B cell (primary cell): ENCODE measurements at regions of chr4 and their contacts with region 1.

Region 1: GRCh38 chr4:40309250-40309774 is 25.8 kb upstream of the CHRNA9 start:
- DNase-seq: peak; percentile 91
- ATAC-seq: peak; percentile 16
- H3K4me3 ChIP-seq: peak overlapping the region in 3 of 5 experiments; percentile 17 to 41 (median 38)
- H3K4me3 Mint-ChIP-seq: peak overlapping the region; percentile 87
- H3K27ac ChIP-seq: peak overlapping the region; percentile 94 to 98
- H3K27ac Mint-ChIP-seq: peak overlapping the region; percentile 97
- H3K4me1 ChIP-seq: peaks cover 67 to 71% of the 10 kb centered on the region in 2 donors
- H3K4me1 Mint-ChIP-seq: peaks cover 73% of the 10 kb centered on the region
- H3K27me3 ChIP-seq: no peaks in the 10 kb centered on the region
- H3K27me3 Mint-ChIP-seq: no peaks in the 10 kb centered on the region
- CTCF ChIP-seq: peak; percentile 83

Region 2: DNA sequence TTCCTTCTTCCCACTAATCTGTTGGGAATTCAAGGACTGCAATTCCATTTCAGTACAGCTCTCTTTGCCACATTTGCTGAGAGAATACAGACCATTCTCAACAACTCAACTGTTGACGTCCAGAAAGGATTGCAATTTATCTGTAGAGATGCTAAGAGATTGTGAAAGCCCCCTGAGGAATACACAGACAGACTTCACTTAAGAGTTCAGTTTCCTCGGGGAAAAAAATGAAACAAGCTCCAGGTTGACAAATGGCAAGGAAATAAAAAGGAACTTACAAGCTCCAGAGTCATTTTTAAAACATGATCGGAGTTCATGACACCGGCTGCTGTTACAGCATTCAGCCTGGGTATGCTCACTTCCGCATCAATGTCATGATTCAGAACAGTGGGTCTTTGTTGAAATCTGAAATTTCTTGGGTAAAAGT is 1540.3 kb before region 1 on chr4:
- CTCF ChIA-PET with region 1: no interaction called
- POLR2A ChIA-PET with region 1: no interaction called
- intact Hi-C with region 1: loop called (anchors 10 kb)
- DNase-seq: peak; percentile 35
- ATAC-seq: peak; percentile 69
- H3K4me3 ChIP-seq: peak overlapping the region in 1 of 5 experiments; percentile 11
- H3K4me3 Mint-ChIP-seq: peak overlapping the region; percentile 73
- H3K27ac ChIP-seq: peak overlapping the region; percentile 4 to 66
- H3K27ac Mint-ChIP-seq: peak overlapping the region; percentile 89
- H3K4me1 ChIP-seq: peaks cover 53 to 57% of the 10 kb centered on the region in 2 donors
- H3K4me1 Mint-ChIP-seq: peaks cover 76% of the 10 kb centered on the region
- H3K27me3 ChIP-seq: no peaks in the 10 kb centered on the region
- H3K27me3 Mint-ChIP-seq: no peaks in the 10 kb centered on the region
- CTCF ChIP-seq: no peak

Region 3: DNA sequence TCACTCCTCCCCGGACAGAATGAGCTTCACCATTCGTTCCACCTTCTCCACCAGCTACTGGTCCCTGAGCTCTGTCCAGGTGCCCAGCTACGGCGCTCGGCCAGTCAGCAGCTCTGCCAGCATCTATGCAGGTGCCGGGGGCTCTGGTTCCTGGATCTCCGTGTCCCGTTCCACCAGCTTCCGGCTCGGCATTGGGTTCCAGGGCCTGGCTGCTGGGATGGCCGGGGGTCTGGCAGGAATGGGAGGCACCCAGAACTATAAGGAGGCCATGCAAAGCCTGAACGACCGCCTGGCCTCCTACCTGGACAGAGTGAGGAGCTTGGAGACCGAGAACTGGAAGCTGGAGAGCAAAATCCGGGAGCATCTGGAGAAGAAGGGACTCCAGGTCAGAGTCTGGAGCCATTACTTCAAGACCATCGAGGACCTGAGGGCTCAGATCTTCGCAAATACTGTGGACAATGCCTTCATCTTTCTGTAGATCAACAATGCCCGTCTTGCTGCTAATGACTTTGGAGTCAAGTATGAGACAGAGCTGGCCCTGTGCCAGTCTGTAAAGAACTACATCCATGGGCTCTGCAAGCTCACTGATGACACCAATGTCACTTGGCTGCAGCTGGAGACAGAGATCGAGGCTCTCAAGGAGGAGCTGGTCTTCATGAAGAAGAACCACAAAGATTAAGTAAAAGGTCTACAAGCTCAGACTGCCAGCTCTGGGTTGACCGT is 288.9 kb before region 1 on chr4:
- CTCF ChIA-PET with region 1: no interaction called
- POLR2A ChIA-PET with region 1: interaction called, 10 read pairs
- intact Hi-C with region 1: no loop called
- DNase-seq: no peak
- ATAC-seq: no peak
- H3K4me3 ChIP-seq: no peak overlapping the region
- H3K4me3 Mint-ChIP-seq: no peak overlapping the region
- H3K27ac ChIP-seq: no peak overlapping the region
- H3K27ac Mint-ChIP-seq: no peak overlapping the region
- H3K4me1 ChIP-seq: no peaks in the 10 kb centered on the region
- H3K4me1 Mint-ChIP-seq: no peaks in the 10 kb centered on the region
- H3K27me3 ChIP-seq: no peaks in the 10 kb centered on the region
- H3K27me3 Mint-ChIP-seq: no peaks in the 10 kb centered on the region
- CTCF ChIP-seq: no peak

Region 4: GRCh38 chr4:40046311-40046980 is 262.9 kb before region 1 on chr4:
- CTCF ChIA-PET with region 1: no interaction called
- POLR2A ChIA-PET with region 1: no interaction called
- intact Hi-C with region 1: no loop called
- DNase-seq: no peak
- ATAC-seq: no peak
- H3K4me3 ChIP-seq: no peak overlapping the region
- H3K4me3 Mint-ChIP-seq: no peak overlapping the region
- H3K27ac ChIP-seq: no peak overlapping the region
- H3K27ac Mint-ChIP-seq: no peak overlapping the region
- H3K4me1 ChIP-seq: no peaks in the 10 kb centered on the region
- H3K4me1 Mint-ChIP-seq: no peaks in the 10 kb centered on the region
- H3K27me3 ChIP-seq: no peaks in the 10 kb centered on the region
- H3K27me3 Mint-ChIP-seq: no peaks in the 10 kb centered on the region
- CTCF ChIP-seq: no peak

Region 5: GRCh38 chr4:40193016-40193571 is 116.2 kb before region 1 on chr4:
- CTCF ChIA-PET with region 1: interaction called, 93 read pairs
- POLR2A ChIA-PET with region 1: interaction called, 10 read pairs
- intact Hi-C with region 1: loop called (anchors 1 kb)
- DNase-seq: peak; percentile 73
- ATAC-seq: peak; percentile 37
- H3K4me3 ChIP-seq: peak overlapping the region; percentile 45 to 91 (median 60)
- H3K4me3 Mint-ChIP-seq: peak overlapping the region; percentile 96
- H3K27ac ChIP-seq: peak overlapping the region; percentile 93 to 99
- H3K27ac Mint-ChIP-seq: peak overlapping the region; percentile 91
- H3K4me1 ChIP-seq: peaks cover 59 to 79% of the 10 kb centered on the region in 2 donors
- H3K4me1 Mint-ChIP-seq: peaks cover 75% of the 10 kb centered on the region
- H3K27me3 ChIP-seq: no peaks in the 10 kb centered on the region
- H3K27me3 Mint-ChIP-seq: no peaks in the 10 kb centered on the region
- CTCF ChIP-seq: no peak

Region 6: GRCh38 chr4:40221744-40222143 is 87.6 kb before region 1 on chr4:
- CTCF ChIA-PET with region 1: interaction called, 135 read pairs
- POLR2A ChIA-PET with region 1: interaction called, 4 read pairs
- intact Hi-C with region 1: no loop called
- DNase-seq: no peak
- ATAC-seq: no peak
- H3K4me3 ChIP-seq: no peak overlapping the region
- H3K4me3 Mint-ChIP-seq: peak overlapping the region; percentile 38
- H3K27ac ChIP-seq: peak overlapping the region in 1 of 2 donors; percentile 73
- H3K27ac Mint-ChIP-seq: peak overlapping the region; percentile 64
- H3K4me1 ChIP-seq: peaks cover 80 to 91% of the 10 kb centered on the region in 2 donors
- H3K4me1 Mint-ChIP-seq: peaks cover 87% of the 10 kb centered on the region
- H3K27me3 ChIP-seq: no peaks in the 10 kb centered on the region
- H3K27me3 Mint-ChIP-seq: no peaks in the 10 kb centered on the region
- CTCF ChIP-seq: no peak

Region 7: DNA sequence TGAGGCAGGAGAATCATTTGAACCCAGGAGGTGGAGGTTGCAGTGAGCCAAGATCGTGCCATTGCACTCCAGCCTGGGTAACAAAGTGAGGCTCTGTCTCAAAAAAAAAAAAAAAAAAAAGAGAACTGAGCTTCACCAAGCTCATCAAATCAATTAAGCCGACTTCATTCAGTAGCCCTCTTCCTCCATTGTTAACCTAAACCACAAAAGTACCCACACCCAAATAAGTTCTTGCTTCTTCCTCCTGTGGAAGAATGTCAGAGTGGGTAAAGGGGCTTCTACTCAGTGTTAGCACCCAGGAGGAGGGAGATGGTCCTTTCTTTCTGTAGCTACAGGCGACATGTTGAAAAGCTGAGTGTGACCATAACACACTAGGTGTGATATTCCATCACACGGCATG is 32.8 kb before region 1 on chr4:
- CTCF ChIA-PET with region 1: interaction called, 11 read pairs
- POLR2A ChIA-PET with region 1: no interaction called
- intact Hi-C with region 1: no loop called
- DNase-seq: peak; percentile 36
- ATAC-seq: no peak
- H3K4me3 ChIP-seq: no peak overlapping the region
- H3K4me3 Mint-ChIP-seq: no peak overlapping the region
- H3K27ac ChIP-seq: no peak overlapping the region
- H3K27ac Mint-ChIP-seq: no peak overlapping the region
- H3K4me1 ChIP-seq: peaks cover 14 to 16% of the 10 kb centered on the region in 2 donors
- H3K4me1 Mint-ChIP-seq: peaks cover 23% of the 10 kb centered on the region
- H3K27me3 ChIP-seq: no peaks in the 10 kb centered on the region
- H3K27me3 Mint-ChIP-seq: no peaks in the 10 kb centered on the region
- CTCF ChIP-seq: no peak

Region 8: GRCh38 chr4:40492691-40493090 is 183.4 kb after region 1 on chr4:
- CTCF ChIA-PET with region 1: no interaction called
- POLR2A ChIA-PET with region 1: no interaction called
- intact Hi-C with region 1: no loop called
- DNase-seq: no peak
- ATAC-seq: no peak
- H3K4me3 ChIP-seq: no peak overlapping the region
- H3K4me3 Mint-ChIP-seq: no peak overlapping the region
- H3K27ac ChIP-seq: no peak overlapping the region
- H3K27ac Mint-ChIP-seq: no peak overlapping the region
- H3K4me1 ChIP-seq: no peaks in the 10 kb centered on the region
- H3K4me1 Mint-ChIP-seq: no peaks in the 10 kb centered on the region
- H3K27me3 ChIP-seq: no peaks in the 10 kb centered on the region
- H3K27me3 Mint-ChIP-seq: no peaks in the 10 kb centered on the region
- CTCF ChIP-seq: no peak

Region 9: DNA sequence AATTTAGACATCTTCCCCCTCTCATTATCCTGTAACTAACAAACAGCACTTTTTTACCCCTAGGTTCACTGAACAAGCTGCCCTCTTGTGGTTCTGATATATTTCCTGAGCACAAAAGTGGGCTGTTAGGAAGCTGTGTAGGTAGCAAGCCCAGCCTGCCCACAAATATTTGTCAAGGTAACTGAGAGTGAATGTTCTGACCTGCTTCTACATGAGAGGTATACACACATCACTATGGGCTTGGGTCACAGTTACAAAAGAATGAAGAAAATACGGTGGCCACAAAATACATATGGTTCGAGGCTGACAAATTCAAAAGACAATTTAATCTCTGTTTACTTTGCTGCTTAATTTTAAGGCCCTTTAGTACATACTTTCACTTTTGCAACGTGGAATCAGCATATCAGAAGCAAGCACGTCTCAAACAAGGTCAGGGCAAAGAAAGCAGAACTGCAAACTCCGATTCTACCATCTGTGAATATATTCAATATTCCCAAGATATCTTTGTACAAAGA is 241.7 kb after region 1 on chr4:
- CTCF ChIA-PET with region 1: interaction called, 6 read pairs
- POLR2A ChIA-PET with region 1: no interaction called
- intact Hi-C with region 1: loop called (anchors 5 kb)
- DNase-seq: peak; percentile 80
- ATAC-seq: peak; percentile 82
- H3K4me3 ChIP-seq: peak overlapping the region; percentile 11 to 72 (median 56)
- H3K4me3 Mint-ChIP-seq: peak overlapping the region; percentile 84
- H3K27ac ChIP-seq: peak overlapping the region; percentile 77 to 84
- H3K27ac Mint-ChIP-seq: peak overlapping the region; percentile 88
- H3K4me1 ChIP-seq: peaks cover 17 to 21% of the 10 kb centered on the region in 2 donors
- H3K4me1 Mint-ChIP-seq: peaks cover 32% of the 10 kb centered on the region
- H3K27me3 ChIP-seq: no peaks in the 10 kb centered on the region
- H3K27me3 Mint-ChIP-seq: no peaks in the 10 kb centered on the region
- CTCF ChIP-seq: peak; percentile 59